ENCODE measurements at regions of chr3 and their contacts with region 1.

Region 1: DNA sequence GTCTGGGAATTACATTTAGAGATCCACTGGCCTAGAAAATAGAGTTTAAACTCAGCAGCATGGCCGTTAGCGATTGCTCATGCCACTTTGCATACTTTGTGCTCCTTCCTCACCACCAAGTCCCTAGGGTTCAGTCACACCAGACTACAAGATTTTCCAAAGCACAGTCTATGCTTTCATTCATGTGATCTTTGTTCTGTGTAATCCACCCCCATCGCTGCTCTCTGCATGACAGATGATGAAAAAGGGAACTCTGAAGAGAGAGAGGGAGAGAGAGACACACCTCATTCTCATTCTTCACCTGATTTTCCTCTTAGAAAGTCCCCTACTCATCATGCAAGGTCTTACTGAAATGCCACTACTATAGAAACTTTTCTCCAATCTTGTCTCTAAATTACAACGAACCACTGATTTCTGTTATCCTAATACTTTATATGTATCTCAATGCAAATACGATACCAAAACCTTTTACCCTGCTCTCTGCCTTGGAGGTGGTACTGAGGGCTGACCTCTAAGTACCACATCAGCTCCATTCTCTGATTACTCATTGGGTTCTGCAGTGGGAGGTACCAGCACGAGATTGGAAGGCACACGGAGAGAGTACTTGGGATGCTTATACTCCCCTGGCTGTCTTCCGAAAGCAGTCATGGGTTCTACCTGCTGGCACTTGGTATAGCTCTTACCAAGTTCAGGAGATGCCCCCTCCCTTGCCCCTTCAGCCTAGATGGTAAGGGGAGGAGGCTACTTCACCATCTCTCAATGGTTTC is 1.1 kb upstream of the PARP15 start:
- DNase-seq: no peak
- H3K4me3 Mint-ChIP-seq: peak overlapping the region; percentile 25
- H3K27ac Mint-ChIP-seq: peak overlapping the region; percentile 77
- H3K4me1 Mint-ChIP-seq: peaks cover 59% of the 10 kb centered on the region
- H3K27me3 Mint-ChIP-seq: no peaks in the 10 kb centered on the region

Region 2: GRCh38 chr3:122415720-122416654 is 160.4 kb before region 1 on chr3 and contains the start of gene WDR5B:
- intact Hi-C with region 1: no loop called
- DNase-seq: peak; percentile 96
- H3K4me3 Mint-ChIP-seq: peak within 1 kb of the TSS; percentile 98
- H3K27ac Mint-ChIP-seq: peak within 1 kb of the TSS; percentile 99
- H3K4me1 Mint-ChIP-seq: peaks cover 48% of the 10 kb centered on the region
- H3K27me3 Mint-ChIP-seq: no peaks in the 10 kb centered on the region
- total RNA-seq, gene WDR5B: 4.3 and 5.6 TPM in 2 replicates

Region 3: DNA sequence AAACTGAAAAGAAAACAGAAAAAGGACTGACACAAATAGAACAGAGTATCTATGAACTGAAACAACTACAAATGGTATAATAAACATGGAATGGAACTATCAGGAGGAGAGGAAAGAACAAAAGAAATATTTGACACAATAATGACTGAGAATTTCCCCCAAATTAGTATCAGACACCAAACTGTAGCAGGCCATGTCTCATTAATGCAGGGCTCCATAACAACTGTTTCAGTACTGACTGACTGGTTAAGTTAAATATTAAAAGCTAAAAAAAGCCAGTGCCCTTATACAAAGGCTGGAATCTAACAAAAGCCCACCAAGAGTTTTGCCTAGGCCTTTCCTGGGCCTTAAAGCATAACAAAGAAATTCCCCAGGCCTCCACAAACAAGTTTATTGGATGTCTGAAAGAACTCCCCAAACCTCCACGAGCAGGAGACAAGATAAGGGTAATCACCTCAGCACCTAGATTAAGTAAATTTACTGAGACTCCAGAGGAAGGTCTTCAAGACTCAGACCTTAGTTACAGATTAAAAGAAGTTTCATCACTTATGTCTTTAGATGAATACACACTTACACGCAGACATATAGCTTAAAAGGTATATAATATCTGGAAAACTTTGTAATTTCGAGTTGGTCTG is 107.3 kb before region 1 on chr3:
- intact Hi-C with region 1: no loop called
- DNase-seq: no peak
- H3K4me3 Mint-ChIP-seq: no peak overlapping the region
- H3K27ac Mint-ChIP-seq: no peak overlapping the region
- H3K4me1 Mint-ChIP-seq: peaks cover 41% of the 10 kb centered on the region
- H3K27me3 Mint-ChIP-seq: no peaks in the 10 kb centered on the region

Region 4: DNA sequence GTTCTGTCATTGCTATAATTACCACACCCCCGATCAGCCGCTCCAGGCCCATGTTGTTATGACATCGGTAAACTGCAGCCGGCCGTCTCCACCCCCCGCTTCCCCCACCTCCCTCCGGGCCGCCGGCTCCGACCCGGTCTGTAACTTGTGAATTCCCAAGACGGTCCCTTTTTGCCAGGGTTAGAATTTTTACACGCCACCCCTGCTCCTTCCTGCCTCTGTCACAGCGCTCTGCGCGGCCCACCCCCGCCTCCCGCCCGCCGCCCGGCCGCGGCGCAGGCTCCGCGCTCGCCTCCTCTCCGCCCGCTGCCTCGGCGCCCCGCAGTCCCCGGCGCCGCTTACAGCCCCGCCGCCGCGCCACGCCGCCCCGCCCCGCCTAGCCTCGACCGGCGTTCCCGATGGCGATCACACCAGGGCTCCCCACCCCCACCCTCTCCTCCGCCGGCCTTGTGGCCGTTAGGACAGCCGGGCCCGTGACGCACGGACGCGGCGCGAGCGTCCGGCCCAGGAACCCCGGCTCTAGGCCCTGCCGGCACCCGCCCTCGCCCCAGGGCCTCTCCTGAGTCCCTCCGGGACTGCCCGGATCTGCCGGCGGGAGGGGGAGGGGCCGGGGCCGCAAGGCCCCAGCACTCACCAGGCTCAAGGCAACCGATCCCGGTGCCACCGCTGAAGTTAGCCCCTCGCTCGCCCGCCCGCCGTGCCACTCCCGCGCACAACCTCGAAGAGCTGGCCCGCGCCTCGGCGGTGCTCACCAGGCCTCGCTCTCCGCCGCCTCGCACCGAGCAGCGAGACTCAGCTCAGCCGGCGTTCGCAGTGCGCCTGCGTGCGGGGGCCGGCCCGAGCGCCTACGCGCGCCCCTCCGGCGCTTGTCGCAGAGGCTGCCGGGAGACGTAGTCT is 62.0 kb before region 1 on chr3 and contains the start of gene KPNA1:
- intact Hi-C with region 1: loop called (anchors 1 kb)
- DNase-seq: peak; percentile 85
- H3K4me3 Mint-ChIP-seq: peak within 1 kb of the TSS; percentile 90
- H3K27ac Mint-ChIP-seq: peak within 1 kb of the TSS; percentile 92
- H3K4me1 Mint-ChIP-seq: peaks cover 46% of the 10 kb centered on the region
- H3K27me3 Mint-ChIP-seq: peaks cover 4% of the 10 kb centered on the region
- total RNA-seq, gene KPNA1: 81.7 and 88.2 TPM in 2 replicates

Region 5: GRCh38 chr3:122564155-122564912 is 12.0 kb before region 1 on chr3 and contains the starts of genes DTX3L and PARP9:
- intact Hi-C with region 1: loop called (anchors 1 kb)
- DNase-seq: peak; percentile 87
- H3K4me3 Mint-ChIP-seq: peak within 1 kb of the TSS; percentile 99
- H3K27ac Mint-ChIP-seq: peak within 1 kb of the TSS; percentile 98
- H3K4me1 Mint-ChIP-seq: peaks cover 79% of the 10 kb centered on the region
- H3K27me3 Mint-ChIP-seq: no peaks in the 10 kb centered on the region
- total RNA-seq, gene DTX3L: 40.8 and 44.5 TPM in 2 replicates
- total RNA-seq, gene PARP9: 45.0 and 47.3 TPM in 2 replicates

Region 6: GRCh38 chr3:122642935-122643334 is 66.6 kb after region 1 on chr3:
- intact Hi-C with region 1: loop called (anchors 1 kb)
- DNase-seq: no peak
- H3K4me3 Mint-ChIP-seq: peak overlapping the region; percentile 28
- H3K27ac Mint-ChIP-seq: peak overlapping the region; percentile 74
- H3K4me1 Mint-ChIP-seq: peaks cover 41% of the 10 kb centered on the region
- H3K27me3 Mint-ChIP-seq: no peaks in the 10 kb centered on the region

Region 7: DNA sequence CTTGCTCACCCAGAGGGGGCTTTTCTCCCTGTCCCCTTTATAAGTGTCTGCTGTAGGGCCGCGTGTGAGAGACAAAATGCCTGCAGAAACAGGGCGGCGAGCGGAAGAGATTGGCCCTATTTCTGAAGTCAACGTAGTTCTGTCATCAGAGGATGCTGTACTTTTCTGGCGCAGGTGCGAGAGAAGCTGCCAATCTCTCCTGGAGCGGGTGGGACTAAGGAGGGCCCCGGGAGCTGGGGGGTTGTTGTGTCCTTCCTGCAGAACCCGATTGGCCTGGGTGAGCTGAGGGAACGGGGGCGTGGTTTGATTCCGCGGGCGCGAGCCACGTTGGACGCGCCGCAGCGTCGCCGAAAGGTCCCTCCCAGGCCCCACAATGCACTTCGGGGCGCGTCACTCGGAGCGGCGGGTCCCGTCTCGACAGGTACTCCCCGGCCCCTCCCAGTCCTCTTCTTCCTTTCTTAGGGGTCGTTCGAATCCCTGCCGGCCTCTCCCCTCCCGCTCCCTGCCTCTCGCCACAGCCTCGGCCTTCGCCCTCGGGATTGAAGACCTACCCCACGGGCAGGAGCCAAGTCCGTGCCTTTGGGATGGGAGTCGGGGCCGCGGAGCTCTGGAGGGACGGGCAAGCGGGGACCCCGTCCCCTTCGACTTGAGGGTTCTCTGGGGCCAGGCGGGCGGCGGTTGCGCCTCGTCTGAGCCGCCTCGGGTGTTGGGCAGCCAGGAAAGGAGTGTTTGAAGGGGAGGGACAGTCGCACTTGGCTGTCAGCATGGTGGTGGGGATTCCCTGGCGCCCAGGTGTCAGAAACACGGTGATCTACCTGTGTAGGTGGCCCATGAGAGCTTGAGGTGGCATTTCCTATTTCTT is 625.4 kb after region 1 on chr3 and contains the start of gene SEC22A:
- intact Hi-C with region 1: loop called (anchors 2 kb)
- DNase-seq: peak; percentile 95
- H3K4me3 Mint-ChIP-seq: peak within 1 kb of the TSS; percentile 87
- H3K27ac Mint-ChIP-seq: peak within 1 kb of the TSS; percentile 96
- H3K4me1 Mint-ChIP-seq: peaks cover 29% of the 10 kb centered on the region
- H3K27me3 Mint-ChIP-seq: peaks cover under 1% of the 10 kb centered on the region
- total RNA-seq, gene SEC22A: 15.8 and 18.5 TPM in 2 replicates

Measured in activated T-helper 1 cell treated with anti-CD3 and anti-CD28 coated beads, Interleukin-12 subunit alpha, Interleukin-12 subunit beta, Interleukin-2, Interleukin-4 antibody, amounts not matched to agents 30 ng/mL and 10 ng/mL and 1 ng/mL, durations not matched to agents 14 hours and 24 hours and 36 hours (primary cell).